ENCODE measurements at regions of chr19 and their contacts with region 1.

Region 1: GRCh38 chr19:51338563-51339312 is 3.2 kb downstream of the VSIG10L start:
- DNase-seq: peak; percentile 92

Region 2: GRCh38 chr19:50994129-50994528 is 344.6 kb before region 1 on chr19:
- intact Hi-C with region 1: no loop called
- DNase-seq: no peak

Region 3: DNA sequence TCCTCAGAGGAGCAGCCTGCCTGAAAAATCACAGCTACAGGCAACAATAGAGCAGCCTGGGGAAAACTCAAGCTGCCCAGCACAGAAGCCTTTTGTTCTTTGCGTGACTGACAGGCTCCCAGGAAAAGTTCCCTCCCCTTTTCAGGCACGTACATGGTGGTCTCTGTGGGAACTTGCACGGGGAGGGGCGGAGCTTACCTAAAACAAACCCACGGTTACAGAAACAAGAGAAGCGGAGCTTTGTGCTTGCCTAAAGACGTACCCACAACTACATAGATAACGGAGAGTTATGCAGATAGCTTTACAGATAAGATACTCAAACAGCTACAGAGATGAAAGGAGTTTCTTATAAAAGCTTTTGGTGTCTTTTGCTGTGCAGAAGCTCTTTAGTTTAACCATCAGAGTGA is 16.0 kb after region 1 on chr19:
- intact Hi-C with region 1: no loop called
- DNase-seq: no peak

Region 4: DNA sequence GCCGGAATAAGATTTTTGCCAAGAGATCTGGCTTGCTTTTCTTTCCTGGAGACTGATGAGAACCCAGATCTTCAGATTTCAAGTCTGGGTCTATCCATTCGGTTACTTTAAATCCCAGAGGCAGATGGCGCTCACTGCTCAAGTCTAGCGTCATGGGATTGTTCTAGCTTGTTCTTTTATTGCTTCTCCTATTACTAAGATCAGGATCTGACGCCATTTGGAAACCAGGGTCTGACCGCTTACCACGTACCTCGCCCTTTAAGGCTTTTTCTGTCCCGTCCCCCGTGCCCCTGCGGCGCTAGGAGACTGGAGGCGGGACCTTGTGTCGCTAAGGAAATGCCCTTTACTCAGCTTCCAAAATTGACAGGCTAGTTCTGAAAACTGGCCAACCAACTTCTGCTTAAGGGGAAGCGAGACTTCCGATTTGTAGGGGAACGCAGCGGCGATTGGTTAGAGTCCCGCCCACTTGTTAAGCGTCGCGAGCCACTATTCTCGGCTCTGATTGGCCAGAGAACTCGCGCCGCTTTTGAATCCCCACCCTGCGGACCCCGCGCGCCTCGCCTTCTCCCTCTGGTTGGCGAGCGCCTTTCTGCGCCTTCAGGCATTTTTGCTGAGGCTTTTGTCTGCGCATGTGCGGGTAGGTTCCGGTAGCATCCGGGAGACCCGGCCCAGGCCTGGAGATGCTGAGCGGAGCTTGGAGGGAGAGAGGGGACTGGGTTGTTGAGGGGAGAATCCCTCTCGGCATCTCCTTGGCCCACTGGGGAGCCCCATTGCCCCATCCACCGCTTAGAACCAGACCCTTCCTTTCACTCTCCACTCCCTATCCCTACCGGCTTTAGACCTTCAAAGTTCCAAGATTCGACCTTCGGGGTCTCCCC is 55.5 kb after region 1 on chr19:
- intact Hi-C with region 1: loop called (anchors 10 kb)
- DNase-seq: peak; percentile 95

Region 5: DNA sequence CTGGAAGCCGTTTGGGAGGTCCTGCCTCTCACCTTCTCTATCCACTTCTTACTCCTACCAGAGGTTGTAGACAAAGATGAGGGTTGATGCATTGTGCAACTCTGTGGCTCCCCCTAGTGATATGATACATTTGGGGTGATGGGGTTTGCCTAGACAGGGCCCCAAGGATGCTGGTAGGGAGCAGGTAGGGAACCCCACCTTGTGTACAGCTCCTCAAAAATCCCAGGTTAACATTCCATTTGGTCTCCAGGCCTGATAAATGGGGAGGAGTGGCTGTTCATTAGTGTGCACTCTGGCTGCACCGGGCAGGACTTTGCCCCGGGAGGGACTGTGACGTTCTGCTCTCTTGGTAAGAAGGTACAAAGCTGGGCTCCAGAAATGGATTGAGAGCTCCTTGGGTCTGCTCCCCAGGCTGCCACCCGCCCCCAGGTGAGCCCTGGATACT is 100.3 kb after region 1 on chr19:
- intact Hi-C with region 1: loop called (anchors 5 kb)
- DNase-seq: no peak